Upper lobe of right lung (tissue), 1 donor: ENCODE measurements at regions of chr3 and their contacts with region 1.

Region 1: DNA sequence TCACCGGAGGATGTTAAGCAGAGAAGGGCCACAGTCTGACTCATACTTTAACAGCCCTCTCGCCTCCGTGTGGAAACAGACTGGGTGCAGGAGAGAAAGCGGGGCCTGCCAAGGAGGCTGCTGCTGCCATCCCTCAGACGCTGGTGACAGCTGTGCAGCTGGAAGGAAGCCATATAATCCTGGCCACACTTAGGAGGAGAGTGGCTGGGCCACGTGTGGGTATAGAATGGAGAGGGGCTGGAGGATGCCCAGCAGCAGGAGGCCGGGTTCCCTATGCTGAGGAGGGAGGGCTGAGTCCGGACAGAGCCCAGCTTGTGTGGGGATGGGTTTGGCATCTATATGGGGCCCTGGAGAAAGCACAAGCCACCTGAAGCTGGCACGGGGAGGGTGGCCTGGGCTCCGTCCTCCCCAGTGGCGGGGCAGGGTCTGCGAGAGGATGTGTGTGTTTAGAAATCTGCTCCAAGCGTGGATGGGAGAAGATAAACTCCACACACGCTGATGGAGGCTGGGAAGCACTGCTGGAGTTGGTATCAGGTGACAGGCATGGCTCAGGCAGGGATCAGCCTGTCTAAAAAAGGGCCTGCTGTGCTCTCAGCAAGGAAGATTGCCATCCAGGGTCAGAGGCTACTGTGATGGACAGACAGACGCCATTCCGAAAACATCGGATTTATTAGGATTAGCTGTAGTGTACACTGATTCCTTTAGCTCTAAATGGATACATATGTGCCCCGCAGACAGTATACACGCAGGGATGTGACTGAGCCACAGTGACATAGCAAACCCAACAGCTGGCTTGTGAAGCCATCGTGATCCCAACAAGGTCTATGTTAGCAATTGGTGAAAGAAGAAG is 15.9 kb downstream of the ABTB1 start:
- DNase-seq: peak; percentile 34
- ATAC-seq: no peak
- H3K4me3 ChIP-seq: no peak overlapping the region
- H3K27ac ChIP-seq: no peak overlapping the region
- H3K4me1 ChIP-seq: peaks cover 20% of the 10 kb centered on the region
- H3K27me3 ChIP-seq: no peaks in the 10 kb centered on the region
- CTCF ChIP-seq: no peak

Region 2: DNA sequence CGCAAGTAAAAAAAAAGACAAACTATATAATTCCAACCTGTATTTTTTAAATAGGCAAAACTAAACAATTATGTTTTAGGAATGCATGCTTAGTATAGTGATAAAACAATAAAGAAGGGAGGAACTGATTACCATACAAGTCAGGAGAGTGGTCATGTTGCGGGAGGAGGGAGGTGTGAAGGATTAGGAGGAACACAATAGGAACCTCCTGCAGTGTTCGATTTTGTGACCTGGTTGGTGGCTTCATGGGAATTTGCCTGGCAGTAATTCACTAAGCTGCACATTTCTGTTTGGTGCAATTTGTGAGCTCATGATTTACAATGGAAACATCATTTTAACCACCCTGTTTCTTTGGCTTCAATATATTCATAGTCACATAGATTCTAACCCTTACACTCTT is 176.4 kb before region 1 on chr3:
- intact Hi-C with region 1: no loop called
- DNase-seq: no peak
- ATAC-seq: no peak
- H3K4me3 ChIP-seq: no peak overlapping the region
- H3K27ac ChIP-seq: no peak overlapping the region
- H3K4me1 ChIP-seq: no peaks in the 10 kb centered on the region
- H3K27me3 ChIP-seq: no peaks in the 10 kb centered on the region
- CTCF ChIP-seq: no peak

Region 3: GRCh38 chr3:127822698-127823425 is 134.2 kb after region 1 on chr3:
- intact Hi-C with region 1: loop called (anchors 10 kb)
- DNase-seq: peak; percentile 86
- ATAC-seq: peak; percentile 82
- H3K4me3 ChIP-seq: peak overlapping the region; percentile 87
- H3K27ac ChIP-seq: peak overlapping the region; percentile 87
- H3K4me1 ChIP-seq: peaks cover 33% of the 10 kb centered on the region
- H3K27me3 ChIP-seq: no peaks in the 10 kb centered on the region
- CTCF ChIP-seq: peak; percentile 23